CD8-positive, alpha-beta T cell (primary cell): ENCODE measurements at regions of chr1 and their contacts with region 1.

Region 1: GRCh38 chr1:19715334-19716203 is 50.9 kb downstream of the HTR6 start:
- DNase-seq: peak; percentile 54 to 88 (median 81)
- ATAC-seq: peak; percentile 100
- H3K4me3 ChIP-seq: no peak overlapping the region
- H3K4me3 Mint-ChIP-seq: no peak overlapping the region
- H3K27ac ChIP-seq: no peak overlapping the region
- H3K27ac Mint-ChIP-seq: no peak overlapping the region
- H3K4me1 ChIP-seq: no peaks in the 10 kb centered on the region
- H3K4me1 Mint-ChIP-seq: peaks cover 11% of the 10 kb centered on the region
- H3K27me3 ChIP-seq: no peaks in the 10 kb centered on the region
- H3K27me3 Mint-ChIP-seq: no peaks in the 10 kb centered on the region
- CTCF ChIP-seq: peak; percentile 77

Region 2: GRCh38 chr1:19725596-19725995 is 10.0 kb after region 1 on chr1:
- CTCF ChIA-PET with region 1: interaction called, 14 read pairs
- POLR2A ChIA-PET with region 1: interaction called, 3 read pairs
- intact Hi-C with region 1: no loop called
- DNase-seq: no peak
- ATAC-seq: no peak
- H3K4me3 ChIP-seq: no peak overlapping the region
- H3K4me3 Mint-ChIP-seq: no peak overlapping the region
- H3K27ac ChIP-seq: no peak overlapping the region
- H3K27ac Mint-ChIP-seq: no peak overlapping the region
- H3K4me1 ChIP-seq: no peaks in the 10 kb centered on the region
- H3K4me1 Mint-ChIP-seq: no peaks in the 10 kb centered on the region
- H3K27me3 ChIP-seq: no peaks in the 10 kb centered on the region
- H3K27me3 Mint-ChIP-seq: no peaks in the 10 kb centered on the region
- CTCF ChIP-seq: no peak